Activated CD8-positive, alpha-beta T cell treated with anti-CD3 and anti-CD28 coated beads, Interleukin-2, amount 10 ng/mL, durations not matched to agents 7 days and 5 days (primary cell): ENCODE measurements at regions of chr18 and their contacts with region 1.

Region 1: DNA sequence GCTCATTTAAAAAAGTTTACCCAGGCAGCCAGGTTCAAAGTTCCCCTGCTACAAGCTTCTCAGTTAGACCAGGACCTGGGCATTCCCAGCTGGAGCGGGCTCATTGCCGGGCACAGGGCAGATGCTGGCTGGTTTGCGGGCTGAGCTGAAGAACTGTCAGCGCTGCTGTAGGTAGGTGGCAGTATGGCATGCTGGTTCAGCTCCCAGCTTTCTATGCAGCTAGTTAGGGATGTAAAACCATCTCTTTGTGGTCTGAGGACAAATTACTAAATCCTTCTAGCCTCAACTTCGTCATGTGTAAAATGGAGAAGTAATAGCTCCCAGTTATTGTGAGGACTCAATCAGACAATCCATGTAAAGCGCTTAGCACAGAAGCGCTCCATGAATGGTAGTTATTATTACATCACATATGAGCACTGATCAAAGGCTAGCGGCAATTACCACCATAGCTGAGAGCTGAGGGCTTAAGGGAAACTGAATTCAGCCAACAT is 2.4 kb upstream of the LDLRAD4 start:
- DNase-seq: peak; percentile 73
- ATAC-seq: peak; percentile 43
- H3K4me3 Mint-ChIP-seq: peak overlapping the region; percentile 71
- H3K27ac Mint-ChIP-seq: no peak overlapping the region
- H3K4me1 Mint-ChIP-seq: peaks cover 36% of the 10 kb centered on the region
- H3K27me3 Mint-ChIP-seq: peaks cover 30% of the 10 kb centered on the region

Region 2: GRCh38 chr18:12973562-12974213 is 242.4 kb before region 1 on chr18:
- CTCF ChIA-PET with region 1: no interaction called
- POLR2A ChIA-PET with region 1: no interaction called
- DNase-seq: no peak
- ATAC-seq: no peak
- H3K4me3 Mint-ChIP-seq: no peak overlapping the region
- H3K27ac Mint-ChIP-seq: no peak overlapping the region
- H3K4me1 Mint-ChIP-seq: peaks cover 10% of the 10 kb centered on the region
- H3K27me3 Mint-ChIP-seq: no peaks in the 10 kb centered on the region

Region 3: DNA sequence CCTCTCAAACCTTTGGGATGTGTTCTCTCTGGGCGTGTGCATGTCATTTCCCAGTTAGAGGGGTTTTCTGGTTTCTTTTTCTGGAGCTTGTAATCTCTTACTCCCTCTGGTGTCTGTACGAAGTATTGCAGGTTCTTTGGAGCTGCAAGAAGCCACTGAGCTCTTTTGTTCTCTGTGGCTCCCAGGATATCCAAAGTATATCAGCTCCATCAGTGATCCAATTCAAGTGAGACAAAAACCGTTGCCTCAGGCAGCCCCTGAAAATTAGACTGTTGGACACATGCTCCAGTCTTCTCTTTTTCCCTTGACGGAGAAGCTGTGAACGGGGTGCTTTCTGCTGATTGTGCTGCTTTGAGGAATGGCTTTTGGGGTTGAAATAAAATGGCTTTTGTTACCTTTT is 56.6 kb before region 1 on chr18:
- CTCF ChIA-PET with region 1: interaction called, 13 read pairs
- POLR2A ChIA-PET with region 1: interaction called, 3 read pairs
- DNase-seq: peak; percentile 65
- ATAC-seq: peak; percentile 47
- H3K4me3 Mint-ChIP-seq: no peak overlapping the region
- H3K27ac Mint-ChIP-seq: no peak overlapping the region
- H3K4me1 Mint-ChIP-seq: peaks cover 3% of the 10 kb centered on the region
- H3K27me3 Mint-ChIP-seq: peaks cover 7% of the 10 kb centered on the region

Region 4: DNA sequence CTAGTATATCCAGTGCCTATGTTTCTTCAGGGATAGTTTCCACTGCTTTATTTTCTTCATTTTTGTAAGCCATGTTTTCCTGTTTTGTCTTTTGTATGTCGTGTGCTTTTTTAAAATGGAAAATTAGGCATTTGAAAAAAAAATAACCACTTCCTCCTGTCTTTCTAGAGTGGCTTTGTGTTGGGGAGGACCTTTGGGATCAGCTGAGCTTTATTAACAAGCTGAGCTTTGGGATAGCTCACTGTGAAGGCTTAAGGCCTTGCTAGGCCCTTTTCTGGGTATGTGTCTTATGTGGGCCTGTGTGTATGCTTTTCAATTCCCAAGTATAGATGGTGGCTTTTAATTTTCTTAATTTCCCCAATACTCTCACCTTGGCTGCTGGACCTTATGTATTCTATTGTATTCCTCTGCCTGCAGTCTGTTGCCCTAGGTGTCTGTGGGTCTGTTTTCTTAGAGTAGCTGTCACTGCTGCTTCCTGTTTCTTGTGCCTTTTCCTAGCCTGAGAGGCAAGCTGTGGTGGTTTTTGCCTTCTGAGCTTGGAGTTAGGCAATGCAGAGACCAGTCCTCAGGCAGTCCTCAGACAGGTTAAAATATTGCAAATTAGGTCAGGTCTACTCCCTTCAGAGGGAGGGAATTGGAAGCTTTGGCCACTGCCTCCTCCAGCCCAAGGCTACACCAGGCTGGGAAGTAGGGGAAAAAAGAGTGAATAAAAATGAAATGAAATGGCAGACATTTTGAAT is 137.1 kb after region 1 on chr18:
- CTCF ChIA-PET with region 1: interaction called, 12 read pairs
- POLR2A ChIA-PET with region 1: no interaction called
- DNase-seq: peak; percentile 45
- ATAC-seq: peak; percentile 61
- H3K4me3 Mint-ChIP-seq: peak overlapping the region; percentile 26
- H3K27ac Mint-ChIP-seq: peak overlapping the region; percentile 85
- H3K4me1 Mint-ChIP-seq: peaks cover 15% of the 10 kb centered on the region
- H3K27me3 Mint-ChIP-seq: no peaks in the 10 kb centered on the region

Region 5: DNA sequence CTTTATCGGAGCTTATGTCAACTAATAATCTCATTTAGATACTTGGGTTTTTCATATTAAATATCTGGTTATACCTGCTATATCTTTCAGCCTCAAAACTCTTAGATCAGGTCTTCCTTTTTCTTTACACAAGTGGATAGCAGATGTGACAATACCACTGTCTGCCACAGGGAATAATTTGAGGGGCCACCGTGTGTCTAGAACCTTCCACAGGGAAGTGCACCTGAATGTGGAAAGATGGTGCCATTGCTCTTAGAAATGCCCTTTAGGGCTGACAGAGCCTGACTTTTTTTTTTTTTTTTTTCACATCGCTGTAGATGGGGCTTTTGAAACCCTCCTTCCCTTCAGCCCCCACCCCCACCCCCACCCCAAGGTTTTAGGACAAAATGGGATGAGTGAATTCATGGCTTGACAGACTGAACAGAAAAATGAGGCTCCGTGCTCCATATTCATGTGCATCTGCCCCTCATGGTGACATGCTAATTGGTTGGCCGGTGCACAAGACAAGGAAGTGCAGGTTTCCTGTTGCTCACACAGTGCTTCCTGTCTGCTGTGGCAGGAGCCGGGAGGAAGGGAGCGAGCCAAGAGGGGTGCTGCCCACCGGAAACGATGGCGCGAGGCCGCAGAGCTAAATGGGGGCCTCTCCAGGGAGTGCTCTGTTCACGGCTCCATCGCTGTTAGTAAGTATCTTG is 248.4 kb after region 1 on chr18:
- CTCF ChIA-PET with region 1: interaction called, 14 read pairs
- POLR2A ChIA-PET with region 1: no interaction called
- DNase-seq: peak; percentile 85
- ATAC-seq: peak; percentile 94
- H3K4me3 Mint-ChIP-seq: peak overlapping the region; percentile 82
- H3K27ac Mint-ChIP-seq: peak overlapping the region; percentile 93
- H3K4me1 Mint-ChIP-seq: peaks cover 77% of the 10 kb centered on the region
- H3K27me3 Mint-ChIP-seq: no peaks in the 10 kb centered on the region

Region 6: GRCh38 chr18:13577091-13577697 is 361.1 kb after region 1 on chr18:
- CTCF ChIA-PET with region 1: interaction called, 12 read pairs
- POLR2A ChIA-PET with region 1: no interaction called
- DNase-seq: peak; percentile 71
- ATAC-seq: peak; percentile 90
- H3K4me3 Mint-ChIP-seq: peak overlapping the region; percentile 60
- H3K27ac Mint-ChIP-seq: peak overlapping the region; percentile 89
- H3K4me1 Mint-ChIP-seq: peaks cover 76% of the 10 kb centered on the region
- H3K27me3 Mint-ChIP-seq: no peaks in the 10 kb centered on the region

Region 7: DNA sequence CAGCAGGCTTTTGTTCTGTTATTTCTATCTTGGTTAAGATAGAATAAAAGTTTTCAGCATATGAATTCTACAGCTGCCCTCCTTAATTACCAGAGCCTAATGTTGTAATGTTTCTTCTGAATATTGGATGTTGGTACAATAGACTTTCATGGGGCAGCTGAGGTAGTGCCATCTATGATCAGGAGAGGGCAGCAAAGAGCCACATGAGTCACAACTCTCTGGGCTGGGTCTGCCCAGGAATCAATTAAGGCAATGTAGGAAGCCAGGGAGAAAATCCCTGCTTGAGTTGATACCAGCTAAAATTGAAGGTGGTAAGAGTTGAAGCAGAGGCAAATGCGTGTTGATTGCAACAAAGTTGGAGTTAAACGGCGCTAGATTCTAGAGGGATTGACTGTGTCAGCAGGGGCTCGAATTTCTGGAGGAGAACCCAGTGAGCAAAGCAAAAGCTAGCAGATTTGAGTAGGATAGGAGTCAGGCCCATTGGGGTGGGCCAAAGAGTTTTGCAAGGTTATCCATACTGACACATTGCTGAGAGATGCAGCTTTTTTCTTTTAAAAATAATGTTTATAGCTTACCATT is 597.2 kb after region 1 on chr18:
- CTCF ChIA-PET with region 1: interaction called, 10 read pairs
- POLR2A ChIA-PET with region 1: no interaction called
- DNase-seq: peak; percentile 66
- ATAC-seq: peak; percentile 79
- H3K4me3 Mint-ChIP-seq: no peak overlapping the region
- H3K27ac Mint-ChIP-seq: no peak overlapping the region
- H3K4me1 Mint-ChIP-seq: no peaks in the 10 kb centered on the region
- H3K27me3 Mint-ChIP-seq: peaks cover 15% of the 10 kb centered on the region